GM23248 (cell line): ENCODE measurements at regions of chr15 and their contacts with region 1.

Region 1: DNA sequence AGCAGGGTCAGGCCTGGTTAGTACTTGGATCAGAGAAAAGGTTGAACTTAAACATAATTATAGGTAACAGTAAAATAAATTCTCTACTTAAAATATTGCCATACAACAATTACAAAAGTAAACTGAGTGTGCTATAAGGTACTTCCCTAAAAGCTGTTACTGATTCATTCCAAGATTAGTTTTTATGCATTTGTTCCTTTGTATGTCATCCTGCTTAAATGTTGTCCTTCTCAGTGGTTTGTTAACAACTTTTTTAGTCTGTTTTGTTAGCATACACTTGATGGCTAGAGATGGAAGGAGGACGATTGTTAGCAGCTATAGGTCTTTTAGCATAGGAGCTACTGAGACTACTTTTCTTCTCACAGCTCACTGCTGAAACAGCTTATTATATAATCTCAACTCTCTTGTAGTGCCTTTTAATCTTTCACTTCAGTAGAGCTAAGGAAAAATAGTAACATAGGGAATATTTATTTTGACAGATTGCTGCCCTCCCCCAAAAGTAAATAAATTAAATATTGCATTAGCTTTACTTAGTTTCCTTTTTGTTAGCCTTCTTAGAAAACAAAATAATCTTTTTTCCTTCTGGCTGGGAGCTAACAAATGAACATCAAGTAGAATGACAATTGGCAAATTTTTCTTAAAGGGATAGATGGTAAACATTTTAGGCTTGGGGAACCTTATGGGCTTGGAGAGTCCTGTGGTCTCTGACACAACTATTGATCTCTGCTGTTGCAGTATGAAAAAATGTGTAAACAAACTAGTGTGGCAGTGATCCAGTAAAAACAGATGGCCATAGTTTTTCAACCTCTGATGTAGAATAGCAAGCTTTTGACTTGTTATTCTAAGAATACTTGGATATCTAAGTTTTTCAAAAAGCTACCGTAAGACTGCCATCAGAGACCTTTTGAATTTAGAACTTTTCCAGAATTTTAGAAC is 39.5 kb downstream of the USP8 start:
- DNase-seq: peak; percentile 21
- H3K4me3 ChIP-seq: no peak overlapping the region
- H3K27ac ChIP-seq: no peak overlapping the region
- H3K4me1 ChIP-seq: 0 out of 2 replicates have a peak, but pooled peaks cover under 1% of the 10 kb centered on the region
- H3K27me3 ChIP-seq: no peaks in the 10 kb centered on the region

Region 2: DNA sequence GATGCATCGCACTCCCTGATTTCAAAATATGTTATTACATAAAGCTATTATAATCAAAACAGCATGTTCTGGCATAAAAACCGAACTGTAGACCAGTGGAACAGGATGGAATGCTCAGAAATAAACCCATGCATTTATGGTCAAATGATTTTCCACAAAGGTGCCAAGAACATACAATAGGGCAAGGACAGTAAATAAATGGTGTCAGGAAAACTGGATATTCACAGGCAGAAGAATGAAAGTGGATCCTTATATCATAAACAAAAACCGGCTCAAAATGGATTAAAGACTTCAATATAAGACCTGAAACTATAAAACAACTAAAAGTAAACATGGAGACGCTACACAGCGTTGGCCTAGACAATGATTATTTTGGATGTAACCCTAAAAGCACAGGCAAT is 60.2 kb after region 1 on chr15:
- in situ Hi-C with region 1: loop called (anchors 10 kb)
- DNase-seq: peak; percentile 34
- H3K4me3 ChIP-seq: no peak overlapping the region
- H3K27ac ChIP-seq: no peak overlapping the region
- H3K4me1 ChIP-seq: no peaks in the 10 kb centered on the region
- H3K27me3 ChIP-seq: no peaks in the 10 kb centered on the region

Region 3: GRCh38 chr15:50590288-50590687 is 126.6 kb after region 1 on chr15:
- in situ Hi-C with region 1: no loop called
- DNase-seq: no peak
- H3K4me3 ChIP-seq: no peak overlapping the region
- H3K27ac ChIP-seq: no peak overlapping the region
- H3K4me1 ChIP-seq: no peaks in the 10 kb centered on the region
- H3K27me3 ChIP-seq: no peaks in the 10 kb centered on the region